Transverse colon (tissue), 4 donors: ENCODE measurements at regions of chr7 and their contacts with region 1.

Region 1: GRCh38 chr7:25389489-25390106 is 161.3 kb upstream of the NPVF start:
- DNase-seq: peak; percentile 13
- H3K4me3 ChIP-seq: no peak overlapping the region
- H3K27ac ChIP-seq: peak overlapping the region in 2 of 4 donors; percentile 3 to 31
- H3K4me1 ChIP-seq: peaks cover 0 to 41% (median 24%) of the 10 kb centered on the region in 4 donors
- H3K27me3 ChIP-seq: no peaks in the 10 kb centered on the region
- CTCF ChIP-seq: peak; percentile 50 to 74 (median 54)
- EP300 ChIP-seq: no peak
- POLR2A ChIP-seq: no peak

Region 2: GRCh38 chr7:25179771-25180591 is 209.6 kb before region 1 on chr7:
- in situ Hi-C with region 1: no loop called
- intact Hi-C with region 1: no loop called
- DNase-seq: peak; percentile 98
- H3K4me3 ChIP-seq: peak overlapping the region; percentile 80 to 84 (median 82)
- H3K27ac ChIP-seq: peak overlapping the region; percentile 91 to 95 (median 92)
- H3K4me1 ChIP-seq: peaks cover 0 to 20% (median 9%) of the 10 kb centered on the region in 4 donors
- H3K27me3 ChIP-seq: no peaks in the 10 kb centered on the region
- CTCF ChIP-seq: peak; percentile 69 to 95 (median 92)
- EP300 ChIP-seq: no peak
- POLR2A ChIP-seq: peak; percentile 61

Region 3: GRCh38 chr7:25259587-25260243 is 129.9 kb before region 1 on chr7:
- in situ Hi-C with region 1: loop called (anchors 5 to 10 kb)
- intact Hi-C with region 1: loop called (anchors 2 kb)
- DNase-seq: peak; percentile 76
- H3K4me3 ChIP-seq: no peak overlapping the region
- H3K27ac ChIP-seq: peak overlapping the region in 2 of 4 donors; percentile 76 to 77
- H3K4me1 ChIP-seq: peaks cover 14 to 37% (median 29%) of the 10 kb centered on the region in 4 donors
- H3K27me3 ChIP-seq: no peaks in the 10 kb centered on the region
- CTCF ChIP-seq: peak; percentile 82 to 88 (median 83)
- EP300 ChIP-seq: no peak
- POLR2A ChIP-seq: no peak

Region 4: GRCh38 chr7:25303281-25304156 is 86.1 kb before region 1 on chr7:
- in situ Hi-C with region 1: no loop called
- intact Hi-C with region 1: no loop called
- DNase-seq: no peak
- H3K4me3 ChIP-seq: no peak overlapping the region
- H3K27ac ChIP-seq: peak overlapping the region in 3 of 4 donors; percentile 17 to 57 (median 45)
- H3K4me1 ChIP-seq: peaks cover 0 to 17% (median 9%) of the 10 kb centered on the region in 4 donors
- H3K27me3 ChIP-seq: no peaks in the 10 kb centered on the region
- CTCF ChIP-seq: no peak
- EP300 ChIP-seq: no peak
- POLR2A ChIP-seq: no peak

Region 5: DNA sequence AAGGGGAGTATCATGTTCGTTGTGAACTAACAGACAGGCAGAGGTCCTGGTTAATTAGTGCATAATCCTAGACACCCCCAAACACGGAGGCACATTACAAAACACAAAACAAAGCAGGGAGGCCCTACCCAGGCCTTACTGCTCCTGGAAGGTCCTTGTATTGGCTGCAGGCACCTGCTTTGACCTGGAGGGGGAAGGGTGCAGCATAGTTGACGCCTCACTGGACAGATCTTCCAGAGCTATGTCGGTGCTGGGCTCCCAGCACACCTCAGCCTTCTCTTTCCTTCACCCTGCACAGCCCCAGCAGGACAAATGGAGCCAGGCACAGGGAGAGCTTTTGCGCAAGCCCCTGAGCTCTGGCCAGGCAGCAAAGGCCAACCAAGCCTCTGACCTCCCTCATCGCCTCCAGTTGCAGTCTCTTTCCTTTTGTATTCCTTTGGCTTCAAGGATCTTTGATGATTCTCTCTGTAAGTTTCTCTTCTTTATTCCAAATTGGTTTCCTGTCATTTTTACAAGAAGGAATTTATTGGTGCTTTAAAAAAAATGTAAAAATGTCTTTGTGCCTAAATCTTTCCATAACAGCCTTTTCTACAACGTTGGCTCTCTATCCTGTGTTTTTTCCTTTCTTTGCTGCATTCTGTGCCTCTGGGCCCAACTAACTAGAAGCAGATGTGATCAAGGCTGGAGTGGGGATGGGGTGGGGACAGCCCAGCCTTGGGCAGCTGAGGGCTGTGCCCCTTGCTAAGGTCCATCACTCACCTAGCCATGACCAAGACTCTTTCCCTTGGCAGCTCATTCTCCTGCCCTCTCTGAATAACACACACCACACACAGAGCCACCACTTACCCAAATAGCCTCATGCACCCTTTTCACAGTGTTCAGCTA is 155.8 kb after region 1 on chr7:
- in situ Hi-C with region 1: loop called in 2 of 4 experiments (anchors 10 kb)
- intact Hi-C with region 1: no loop called
- DNase-seq: no peak
- H3K4me3 ChIP-seq: no peak overlapping the region
- H3K27ac ChIP-seq: no peak overlapping the region
- H3K4me1 ChIP-seq: no peaks in the 10 kb centered on the region
- H3K27me3 ChIP-seq: no peaks in the 10 kb centered on the region
- CTCF ChIP-seq: no peak
- EP300 ChIP-seq: no peak
- POLR2A ChIP-seq: no peak

Region 6: GRCh38 chr7:25557379-25557917 is 167.8 kb after region 1 on chr7:
- in situ Hi-C with region 1: loop called in 2 of 4 experiments (anchors 5 to 10 kb)
- intact Hi-C with region 1: loop called (anchors 5 kb)
- DNase-seq: no peak
- H3K4me3 ChIP-seq: no peak overlapping the region
- H3K27ac ChIP-seq: no peak overlapping the region
- H3K4me1 ChIP-seq: peaks cover 0 to 2% (median 0%) of the 10 kb centered on the region in 4 donors
- H3K27me3 ChIP-seq: no peaks in the 10 kb centered on the region
- CTCF ChIP-seq: no peak
- EP300 ChIP-seq: no peak
- POLR2A ChIP-seq: no peak

Region 7: DNA sequence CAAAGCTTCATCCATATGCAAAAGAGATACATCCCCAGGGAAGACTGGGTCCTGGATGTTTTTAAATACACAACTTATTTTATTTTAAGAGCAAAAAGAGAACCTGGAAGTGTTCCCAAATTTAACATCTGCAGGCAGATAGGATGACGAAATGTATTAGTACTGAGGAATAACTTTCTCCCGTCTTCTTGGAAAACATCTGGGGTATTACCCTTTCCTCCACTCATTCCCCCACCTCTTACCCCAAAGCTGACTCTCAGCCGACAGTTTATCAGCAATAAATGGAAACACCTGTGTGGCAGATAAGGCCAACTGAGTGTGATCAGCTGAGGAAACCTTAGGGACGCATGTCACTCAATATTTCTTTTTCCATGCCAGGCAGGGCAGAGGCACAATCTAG is 274.3 kb after region 1 on chr7:
- in situ Hi-C with region 1: no loop called
- intact Hi-C with region 1: loop called (anchors 5 kb)
- DNase-seq: no peak
- H3K4me3 ChIP-seq: no peak overlapping the region
- H3K27ac ChIP-seq: peak overlapping the region; percentile 59 to 80 (median 72)
- H3K4me1 ChIP-seq: peaks cover 0 to 32% (median 11%) of the 10 kb centered on the region in 4 donors
- H3K27me3 ChIP-seq: no peaks in the 10 kb centered on the region
- CTCF ChIP-seq: no peak
- EP300 ChIP-seq: no peak
- POLR2A ChIP-seq: no peak

Region 8: GRCh38 chr7:25758559-25758958 is 369.0 kb after region 1 on chr7:
- in situ Hi-C with region 1: no loop called
- intact Hi-C with region 1: no loop called
- DNase-seq: no peak
- H3K4me3 ChIP-seq: no peak overlapping the region
- H3K27ac ChIP-seq: no peak overlapping the region
- H3K4me1 ChIP-seq: peaks cover 0 to 14% (median 1%) of the 10 kb centered on the region in 4 donors
- H3K27me3 ChIP-seq: no peaks in the 10 kb centered on the region
- CTCF ChIP-seq: no peak
- EP300 ChIP-seq: no peak
- POLR2A ChIP-seq: no peak

Region 9: GRCh38 chr7:25839084-25839769 is 449.6 kb after region 1 on chr7:
- in situ Hi-C with region 1: loop called in 2 of 4 experiments (anchors 10 kb)
- intact Hi-C with region 1: no loop called
- DNase-seq: no peak
- H3K4me3 ChIP-seq: no peak overlapping the region
- H3K27ac ChIP-seq: peak overlapping the region in 1 of 4 donors; percentile 85
- H3K4me1 ChIP-seq: peaks cover 0 to 5% (median 0%) of the 10 kb centered on the region in 4 donors
- H3K27me3 ChIP-seq: no peaks in the 10 kb centered on the region
- CTCF ChIP-seq: peak; percentile 19 to 35 (median 31)
- EP300 ChIP-seq: no peak
- POLR2A ChIP-seq: no peak

Region 10: DNA sequence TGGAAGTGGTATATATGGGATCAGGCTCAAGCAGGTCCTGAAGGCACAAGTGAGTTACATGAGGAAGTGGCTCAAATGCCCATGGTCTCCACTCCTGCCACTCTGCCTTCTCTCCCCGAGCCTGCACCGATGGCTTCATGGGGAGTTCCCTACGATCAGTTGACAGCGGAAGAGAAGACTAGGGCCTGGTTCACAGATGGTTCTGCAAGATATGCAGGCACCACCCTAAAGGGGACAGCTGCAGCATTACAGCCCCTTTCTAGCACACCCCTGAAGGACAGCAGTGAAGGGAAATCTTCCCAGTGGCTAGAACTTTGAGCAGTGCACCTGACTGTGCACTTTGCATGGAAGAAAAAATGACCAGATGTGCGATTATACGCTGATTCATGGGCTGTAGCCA is 1610.9 kb after region 1 on chr7:
- in situ Hi-C with region 1: no loop called
- intact Hi-C with region 1: no loop called
- DNase-seq: no peak
- H3K4me3 ChIP-seq: no peak overlapping the region
- H3K27ac ChIP-seq: no peak overlapping the region
- H3K4me1 ChIP-seq: no peaks in the 10 kb centered on the region
- H3K27me3 ChIP-seq: no peaks in the 10 kb centered on the region
- CTCF ChIP-seq: no peak
- EP300 ChIP-seq: no peak
- POLR2A ChIP-seq: no peak